Motor neuron (in vitro differentiated cells): ENCODE measurements at regions of chr3 and their contacts with region 1.

Region 1: DNA sequence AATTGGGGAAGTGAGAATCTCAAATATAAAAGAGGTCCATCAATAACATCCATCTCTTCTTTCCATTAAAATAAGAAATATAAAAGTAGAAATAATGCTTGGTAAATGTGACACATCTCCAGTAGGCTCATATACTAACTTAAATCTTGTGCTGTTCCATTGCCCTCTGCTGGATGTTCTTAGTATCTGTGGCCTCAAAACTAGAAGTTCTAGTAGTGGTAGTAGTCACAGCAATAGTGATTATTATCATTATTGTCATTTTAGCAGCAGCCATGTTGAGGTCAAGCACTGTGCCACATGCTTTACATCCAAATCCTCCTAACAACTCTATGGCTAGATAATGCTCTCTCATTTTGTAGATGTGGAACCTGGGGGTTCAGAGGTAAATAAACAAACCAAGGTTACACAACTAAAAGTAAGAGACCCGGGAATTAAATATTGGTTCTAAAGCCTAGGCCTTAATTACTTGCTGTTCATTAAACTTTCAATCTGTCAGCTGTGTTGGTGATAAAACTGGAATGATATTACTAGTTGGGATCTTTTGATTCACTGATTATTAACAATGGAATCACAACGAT is 20.2 kb upstream of the BTLA start:
- ATAC-seq: peak in 6 of 8 experiments; percentile 50 to 92 (median 80)
- H3K4me3 ChIP-seq: no peak overlapping the region
- H3K27ac ChIP-seq: no peak overlapping the region
- H3K4me1 ChIP-seq: no peaks in the 10 kb centered on the region

Region 2: GRCh38 chr3:112111785-112112402 is 407.6 kb before region 1 on chr3:
- in situ Hi-C with region 1: loop called in 1 of 9 experiments (anchors 25 kb)
- ATAC-seq: peak; percentile 69 to 99 (median 83)
- H3K4me3 ChIP-seq: no peak overlapping the region
- H3K27ac ChIP-seq: no peak overlapping the region
- H3K4me1 ChIP-seq: no peaks in the 10 kb centered on the region

Region 3: DNA sequence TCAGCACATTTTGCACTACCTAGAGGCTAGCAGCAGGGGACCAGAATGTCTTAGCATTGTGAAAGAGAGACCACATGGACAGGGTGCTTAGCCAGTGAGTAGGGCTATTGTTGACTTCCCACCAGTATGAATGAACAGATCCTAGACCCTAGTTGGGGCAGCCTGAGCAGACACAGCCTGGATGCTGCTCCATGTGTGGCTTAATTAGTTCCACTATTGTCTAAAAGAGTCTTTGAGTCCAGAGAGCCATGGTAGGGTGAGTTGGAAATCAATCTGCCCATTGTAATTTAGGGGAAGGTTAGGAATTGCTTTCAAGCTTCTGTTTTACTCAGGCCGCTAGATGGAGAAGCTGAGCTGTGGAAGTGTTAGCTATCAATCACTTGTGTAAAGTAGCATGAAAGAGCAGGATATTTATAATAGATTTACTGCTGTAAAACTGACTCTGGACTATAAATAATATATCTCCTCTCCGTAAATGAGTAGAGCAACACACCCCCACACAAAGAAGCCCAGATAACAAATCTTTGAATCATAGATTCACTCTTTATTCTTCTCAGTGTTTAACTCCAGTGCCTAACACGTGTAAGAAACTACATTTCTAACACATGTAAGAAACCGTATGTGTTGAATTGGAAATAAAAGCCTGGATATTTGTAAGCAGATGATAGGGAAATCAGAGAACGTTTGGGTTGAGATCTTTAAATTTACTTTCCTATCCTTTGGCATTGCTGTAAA is 382.4 kb before region 1 on chr3:
- in situ Hi-C with region 1: loop called in 3 of 9 experiments (anchors 25 kb)
- ATAC-seq: peak; percentile 60 to 91 (median 81)
- H3K4me3 ChIP-seq: no peak overlapping the region
- H3K27ac ChIP-seq: no peak overlapping the region
- H3K4me1 ChIP-seq: peaks cover 0 to 17% of the 10 kb centered on the region in 2 donors

Region 4: GRCh38 chr3:112293368-112294321 is 225.9 kb before region 1 on chr3 and contains the start of gene SLC9C1:
- in situ Hi-C with region 1: loop called in 1 of 9 experiments (anchors 25 kb)
- ATAC-seq: peak; percentile 57 to 90 (median 84)
- H3K4me3 ChIP-seq: no peak within 1 kb of the TSS
- H3K27ac ChIP-seq: no peak within 1 kb of the TSS
- H3K4me1 ChIP-seq: peaks cover 0 to 6% of the 10 kb centered on the region in 2 donors
- total RNA-seq, gene SLC9C1: 0.05 to 0.27 TPM in 2 of 8 experiments, not detected in the others

Region 5: GRCh38 chr3:112327371-112327951 is 192.1 kb before region 1 on chr3:
- in situ Hi-C with region 1: loop called in 3 of 9 experiments (anchors 10 to 25 kb)
- ATAC-seq: peak; percentile 74 to 91 (median 86)
- H3K4me3 ChIP-seq: no peak overlapping the region
- H3K27ac ChIP-seq: no peak overlapping the region
- H3K4me1 ChIP-seq: no peaks in the 10 kb centered on the region

Region 6: DNA sequence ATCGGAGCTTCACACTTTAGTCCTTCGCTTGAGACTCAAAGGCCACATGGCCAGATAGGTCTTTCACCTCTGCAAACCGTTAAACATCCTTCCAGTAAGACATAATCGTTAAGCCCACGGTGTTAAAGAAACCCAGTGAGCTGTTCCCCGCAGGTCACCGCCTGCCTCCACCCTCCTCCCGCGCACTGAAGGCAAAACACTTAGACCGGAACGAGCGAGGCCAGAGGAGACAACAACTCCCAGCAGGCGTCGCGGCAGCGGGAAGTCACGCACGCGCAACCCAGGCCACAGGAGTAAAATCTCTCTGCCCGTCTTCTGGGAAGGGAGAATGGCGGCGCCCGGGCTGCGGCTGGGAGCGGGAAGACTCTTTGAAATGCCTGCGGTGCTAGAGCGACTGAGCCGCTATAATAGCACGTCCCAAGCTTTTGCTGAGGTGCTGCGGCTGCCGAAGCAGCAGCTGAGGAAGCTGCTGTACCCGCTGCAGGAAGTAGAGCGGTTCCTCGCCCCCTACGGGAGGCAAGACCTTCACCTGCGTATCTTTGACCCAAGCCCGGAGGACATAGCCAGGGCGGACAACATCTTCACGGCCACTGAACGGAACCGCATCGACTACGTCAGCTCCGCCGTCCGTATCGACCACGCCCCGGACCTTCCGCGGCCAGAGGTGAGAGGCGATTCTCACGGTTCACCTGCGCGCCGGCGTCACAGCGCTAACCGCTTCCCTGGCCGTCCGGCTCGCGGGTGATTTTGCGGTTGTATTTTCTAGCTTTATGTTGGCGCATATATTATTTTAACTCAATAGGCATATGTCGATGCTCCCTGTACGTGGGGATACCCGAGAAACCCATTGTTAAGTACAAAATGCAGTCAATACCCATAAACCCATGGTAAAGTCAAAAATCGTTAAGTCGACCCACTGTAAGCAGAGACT is 471.4 kb after region 1 on chr3 and contains the start of gene GTPBP8:
- in situ Hi-C with region 1: no loop called
- ATAC-seq: peak; percentile 95 to 98 (median 97)
- H3K4me3 ChIP-seq: peak within 1 kb of the TSS; percentile 80 to 97 (median 91)
- H3K27ac ChIP-seq: peak within 1 kb of the TSS; percentile 95 to 97
- H3K4me1 ChIP-seq: peaks cover 6 to 16% of the 10 kb centered on the region in 2 donors
- total RNA-seq, gene GTPBP8: 16.8 to 31.2 (median 23.9) TPM